ENCODE measurements at regions of chr12 and their contacts with region 1.

Region 1: DNA sequence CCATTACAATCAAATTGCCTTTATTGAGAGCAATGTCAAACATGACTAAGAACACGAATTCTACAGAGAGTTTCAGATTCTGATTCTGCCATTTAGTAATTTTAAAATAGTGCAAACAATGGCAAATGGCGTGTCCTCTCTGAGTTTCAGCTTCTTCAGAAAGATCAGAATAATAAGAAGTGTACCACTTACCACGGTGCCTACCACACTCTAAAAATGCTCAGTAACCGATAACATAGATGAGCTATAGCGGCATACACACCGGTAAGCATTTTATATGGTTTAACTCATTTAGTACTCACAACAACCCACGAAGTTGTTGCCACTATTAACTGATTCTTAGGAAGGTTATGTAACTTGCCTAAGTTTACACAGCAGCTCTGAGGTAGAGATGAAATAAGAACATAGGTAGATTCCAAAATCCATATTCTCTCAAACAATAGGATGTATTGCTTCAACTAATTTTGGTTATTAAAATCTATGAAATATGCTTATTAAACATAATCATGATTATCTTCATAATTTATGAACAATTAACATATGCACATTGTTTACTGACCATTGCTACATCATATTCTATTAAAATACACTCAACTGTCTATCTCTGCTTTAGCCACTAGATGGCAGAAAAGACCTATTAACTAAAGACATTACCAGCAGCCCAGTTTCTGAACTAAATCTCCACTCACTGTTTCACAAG is 38.3 kb downstream of the SLC6A15 start:
- DNase-seq: peak; percentile 42
- H3K4me3 ChIP-seq: no peak overlapping the region
- H3K27ac ChIP-seq: no peak overlapping the region
- H3K4me1 ChIP-seq: no peaks in the 10 kb centered on the region
- H3K27me3 ChIP-seq: no peaks in the 10 kb centered on the region
- CTCF ChIP-seq: peak; percentile 71 to 76

Region 2: GRCh38 chr12:84912198-84913128 is 38.2 kb after region 1 on chr12 and contains the start of gene SLC6A15:
- CTCF ChIA-PET with region 1: no interaction called
- dilution Hi-C with region 1: no loop called
- in situ Hi-C with region 1: no loop called
- intact Hi-C with region 1: loop called (anchors 2 kb)
- DNase-seq: peak; percentile 88
- H3K4me3 ChIP-seq: peak within 1 kb of the TSS; percentile 64 to 88 (median 77)
- H3K27ac ChIP-seq: peak within 1 kb of the TSS; percentile 85
- H3K4me1 ChIP-seq: peaks cover 7% of the 10 kb centered on the region
- H3K27me3 ChIP-seq: no peaks in the 10 kb centered on the region
- CTCF ChIP-seq: peak; percentile 43 to 74
- total RNA-seq, gene SLC6A15: 26.7 to 185 TPM

Region 3: GRCh38 chr12:85029456-85029855 is 155.2 kb after region 1 on chr12:
- CTCF ChIA-PET with region 1: interaction called, 4 read pairs
- dilution Hi-C with region 1: loop called (anchors 5 kb)
- in situ Hi-C with region 1: loop called in 1 of 2 experiments (anchors 5 kb)
- intact Hi-C with region 1: loop called (anchors 1 kb)
- DNase-seq: peak; percentile 14
- H3K4me3 ChIP-seq: no peak overlapping the region
- H3K27ac ChIP-seq: no peak overlapping the region
- H3K4me1 ChIP-seq: no peaks in the 10 kb centered on the region
- H3K27me3 ChIP-seq: no peaks in the 10 kb centered on the region
- CTCF ChIP-seq: peak; percentile 21 to 45

Region 4: GRCh38 chr12:85036241-85036707 is 162.0 kb after region 1 on chr12 and contains the starts of genes LRRIQ1 and TSPAN19:
- CTCF ChIA-PET with region 1: no interaction called
- dilution Hi-C with region 1: loop called (anchors 5 kb)
- in situ Hi-C with region 1: loop called in 1 of 2 experiments (anchors 5 kb)
- intact Hi-C with region 1: no loop called
- DNase-seq: peak; percentile 88
- H3K4me3 ChIP-seq: peak within 1 kb of the TSS; percentile 64 to 90 (median 75)
- H3K27ac ChIP-seq: peak within 1 kb of the TSS; percentile 77
- H3K4me1 ChIP-seq: peaks cover 3% of the 10 kb centered on the region
- H3K27me3 ChIP-seq: no peaks in the 10 kb centered on the region
- CTCF ChIP-seq: no peak
- total RNA-seq, gene LRRIQ1: 0.99 to 2.2 TPM
- total RNA-seq, gene TSPAN19: 0.67 to 0.68 TPM

Region 5: GRCh38 chr12:85057370-85057963 is 183.2 kb after region 1 on chr12:
- CTCF ChIA-PET with region 1: no interaction called
- dilution Hi-C with region 1: no loop called
- in situ Hi-C with region 1: no loop called
- intact Hi-C with region 1: loop called (anchors 1 kb)
- DNase-seq: peak; percentile 27
- H3K4me3 ChIP-seq: no peak overlapping the region
- H3K27ac ChIP-seq: no peak overlapping the region
- H3K4me1 ChIP-seq: no peaks in the 10 kb centered on the region
- H3K27me3 ChIP-seq: no peaks in the 10 kb centered on the region
- CTCF ChIP-seq: peak; percentile 66 to 81

Measured in mammary epithelial cell (primary cell).